T-cell (primary cell): ENCODE measurements at regions of chr6 and their contacts with region 1.

Region 1: GRCh38 chr6:99393698-99394531 is at the start of gene COQ3:
- DNase-seq: peak; percentile 6 to 70 (median 48)
- ATAC-seq: peak; percentile 68 to 74 (median 72)
- H3K4me3 ChIP-seq: peak within 1 kb of the TSS; percentile 60 to 98
- H3K4me3 Mint-ChIP-seq: peak within 1 kb of the TSS; percentile 93 to 96 (median 94)
- H3K27ac ChIP-seq: peak within 1 kb of the TSS; percentile 26
- H3K27ac Mint-ChIP-seq: peak within 1 kb of the TSS; percentile 80 to 94
- H3K4me1 ChIP-seq: peaks cover 2 to 4% of the 10 kb centered on the region in 2 experiments
- H3K4me1 Mint-ChIP-seq: peaks cover 19 to 27% (median 21%) of the 10 kb centered on the region in 3 donors
- H3K27me3 ChIP-seq: no peaks in the 10 kb centered on the region
- H3K27me3 Mint-ChIP-seq: no peaks in the 10 kb centered on the region
- total RNA-seq, gene COQ3: 2.0 to 5.0 (median 2.9) TPM

Region 2: DNA sequence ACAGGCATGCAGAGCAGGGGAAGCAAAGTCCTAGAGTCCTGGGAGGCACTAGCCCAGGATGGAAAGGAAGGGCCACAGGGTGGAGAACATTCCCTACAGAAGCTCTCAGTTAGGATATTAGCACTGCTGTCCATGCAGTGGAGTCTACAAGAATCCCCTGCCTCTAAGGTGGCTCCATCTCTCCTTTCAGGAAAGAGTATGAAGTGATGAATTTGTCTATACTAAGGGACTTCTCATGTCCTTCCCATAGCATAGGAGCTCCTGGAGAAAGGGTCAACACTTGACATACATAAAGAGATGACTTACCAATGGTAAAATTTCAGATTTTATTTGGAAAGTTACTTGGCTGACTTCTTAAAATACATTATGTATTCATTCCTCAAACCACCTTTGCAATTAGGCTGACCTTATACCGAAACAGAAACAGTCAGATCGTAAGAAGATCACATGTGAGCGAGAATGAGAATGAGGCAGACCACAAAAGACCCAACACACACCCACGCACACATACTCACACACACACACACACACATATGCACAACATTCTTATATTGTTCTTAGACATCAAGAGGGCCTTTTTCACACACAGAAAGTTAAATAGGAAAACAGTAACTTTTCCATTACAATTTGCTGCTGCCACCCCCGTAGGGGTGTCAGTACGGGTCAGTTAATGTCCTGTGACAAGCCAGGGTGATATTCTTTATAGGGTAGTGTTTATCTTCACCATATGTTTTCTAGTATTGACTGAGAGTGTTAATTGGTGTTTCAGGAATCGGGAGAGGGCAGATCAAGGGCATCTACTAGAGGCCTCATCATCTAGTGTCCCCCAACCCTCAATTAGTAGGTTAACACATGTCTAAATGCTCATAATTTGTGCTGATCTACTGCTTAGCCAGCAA is 203.8 kb before region 1 on chr6:
- CTCF ChIA-PET with region 1: no interaction called
- POLR2A ChIA-PET with region 1: no interaction called
- DNase-seq: no peak
- ATAC-seq: no peak
- H3K4me3 ChIP-seq: no peak overlapping the region
- H3K4me3 Mint-ChIP-seq: no peak overlapping the region
- H3K27ac ChIP-seq: no peak overlapping the region
- H3K27ac Mint-ChIP-seq: no peak overlapping the region
- H3K4me1 ChIP-seq: no peaks in the 10 kb centered on the region
- H3K4me1 Mint-ChIP-seq: peaks cover 0 to 3% (median 0%) of the 10 kb centered on the region in 3 donors
- H3K27me3 ChIP-seq: no peaks in the 10 kb centered on the region
- H3K27me3 Mint-ChIP-seq: peaks cover 14 to 24% of the 10 kb centered on the region in 2 donors

Region 3: GRCh38 chr6:99318542-99318941 is 75.4 kb before region 1 on chr6:
- CTCF ChIA-PET with region 1: no interaction called
- POLR2A ChIA-PET with region 1: no interaction called
- DNase-seq: no peak
- ATAC-seq: no peak
- H3K4me3 ChIP-seq: no peak overlapping the region
- H3K4me3 Mint-ChIP-seq: no peak overlapping the region
- H3K27ac ChIP-seq: no peak overlapping the region
- H3K27ac Mint-ChIP-seq: no peak overlapping the region
- H3K4me1 ChIP-seq: no peaks in the 10 kb centered on the region
- H3K4me1 Mint-ChIP-seq: no peaks in the 10 kb centered on the region
- H3K27me3 ChIP-seq: peaks cover 0 to 7% of the 10 kb centered on the region in 2 experiments
- H3K27me3 Mint-ChIP-seq: peaks cover 26 to 27% of the 10 kb centered on the region in 2 donors

Region 4: GRCh38 chr6:99425647-99426453 is 31.9 kb after region 1 on chr6:
- CTCF ChIA-PET with region 1: interaction called in 1 of 2 experiments, 4 read pairs
- POLR2A ChIA-PET with region 1: interaction called, 4 to 11 read pairs
- DNase-seq: peak in 33 of 35 experiments; percentile 2 to 73 (median 29)
- ATAC-seq: peak; percentile 39 to 49 (median 45)
- H3K4me3 ChIP-seq: peak overlapping the region; percentile 92 to 100
- H3K4me3 Mint-ChIP-seq: peak overlapping the region; percentile 93 to 100 (median 99)
- H3K27ac ChIP-seq: peak overlapping the region; percentile 99
- H3K27ac Mint-ChIP-seq: peak overlapping the region; percentile 99 to 100
- H3K4me1 ChIP-seq: peaks cover 31 to 44% of the 10 kb centered on the region in 2 experiments
- H3K4me1 Mint-ChIP-seq: peaks cover 60 to 66% (median 64%) of the 10 kb centered on the region in 3 donors
- H3K27me3 ChIP-seq: no peaks in the 10 kb centered on the region
- H3K27me3 Mint-ChIP-seq: no peaks in the 10 kb centered on the region

Region 5: GRCh38 chr6:99618649-99619408 is 224.9 kb after region 1 on chr6:
- CTCF ChIA-PET with region 1: no interaction called
- POLR2A ChIA-PET with region 1: interaction called in 1 of 2 experiments, 10 read pairs
- DNase-seq: no peak
- ATAC-seq: no peak
- H3K4me3 ChIP-seq: no peak overlapping the region
- H3K4me3 Mint-ChIP-seq: no peak overlapping the region
- H3K27ac ChIP-seq: no peak overlapping the region
- H3K27ac Mint-ChIP-seq: no peak overlapping the region
- H3K4me1 ChIP-seq: peaks cover 8 to 15% of the 10 kb centered on the region in 2 experiments
- H3K4me1 Mint-ChIP-seq: peaks cover 9 to 12% (median 10%) of the 10 kb centered on the region in 3 donors
- H3K27me3 ChIP-seq: peaks cover 42 to 48% of the 10 kb centered on the region in 2 experiments
- H3K27me3 Mint-ChIP-seq: peaks cover 81 to 87% of the 10 kb centered on the region in 2 donors